A549 (cell line): ENCODE measurements at regions of chrX and their contacts with region 1.

Region 1: DNA sequence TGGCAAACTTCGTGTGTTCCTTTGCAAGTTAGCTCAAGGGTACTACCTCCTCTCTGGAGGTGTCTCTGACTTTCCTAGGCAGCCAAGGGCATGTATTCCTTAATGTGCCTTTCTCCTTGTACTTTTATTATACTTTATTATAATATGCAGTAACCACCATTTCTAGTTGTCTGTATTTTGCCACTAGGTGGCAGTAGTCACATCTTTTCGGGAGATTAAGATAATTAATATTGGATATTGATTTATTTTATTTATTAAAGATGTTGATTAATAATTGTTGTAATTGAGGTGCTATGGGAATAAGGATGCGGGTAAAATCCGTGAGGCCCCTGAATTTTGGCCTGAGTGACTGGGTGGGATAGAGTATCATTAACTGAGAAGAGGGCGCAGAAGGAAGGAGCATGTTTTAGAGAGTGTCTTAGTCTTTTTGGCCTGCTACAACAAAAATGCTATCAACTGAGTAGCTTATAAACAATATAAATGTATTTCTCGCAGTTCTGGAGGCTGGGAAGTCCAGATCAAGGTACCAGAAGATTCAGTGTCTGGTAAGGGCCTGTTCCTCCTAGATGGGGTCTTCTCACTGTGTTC is 153.3 kb downstream of the TMEM164 start:
- DNase-seq: no peak
- ATAC-seq: no peak
- H3K4me3 ChIP-seq: no peak overlapping the region
- H3K27ac ChIP-seq: no peak overlapping the region
- H3K4me1 ChIP-seq: peaks cover 26% of the 10 kb centered on the region; the same call in 2 of the 3 replicates
- CTCF ChIP-seq: peak; percentile 58
- EP300 ChIP-seq: no peak
- POLR2A ChIP-seq: no peak
- RAD21 ChIP-seq: peak; percentile 38 to 49; a peak in 4 of 5 replicates

Region 2: GRCh38 chrX:110167952-110168451 is 11.7 kb after region 1 on chrX:
- CTCF ChIA-PET with region 1: interaction called, 13 read pairs
- POLR2A ChIA-PET with region 1: no interaction called
- DNase-seq: peak; percentile 25 to 32
- ATAC-seq: peak; percentile 60 to 78; a peak in 4 of 6 replicates
- H3K4me3 ChIP-seq: no peak overlapping the region
- H3K27ac ChIP-seq: peak overlapping the region; percentile 38 to 67; a peak in 5 of 6 replicates
- H3K4me1 ChIP-seq: peaks cover 47% of the 10 kb centered on the region
- CTCF ChIP-seq: peak; percentile 39
- EP300 ChIP-seq: no peak
- POLR2A ChIP-seq: no peak
- RAD21 ChIP-seq: peak; percentile 41 to 42

Region 3: GRCh38 chrX:110174981-110175421 is 18.7 kb after region 1 on chrX:
- CTCF ChIA-PET with region 1: interaction called, 15 read pairs
- POLR2A ChIA-PET with region 1: no interaction called
- DNase-seq: no peak
- ATAC-seq: no peak
- H3K4me3 ChIP-seq: no peak overlapping the region
- H3K27ac ChIP-seq: peak overlapping the region; percentile 89 to 95; a peak in 5 of 6 replicates
- H3K4me1 ChIP-seq: peaks cover 72% of the 10 kb centered on the region
- CTCF ChIP-seq: no peak
- EP300 ChIP-seq: no peak
- POLR2A ChIP-seq: no peak
- RAD21 ChIP-seq: no peak